GM18951 (cell line): ENCODE measurements at regions of chr1 and their contacts with region 1.

Region 1: GRCh38 chr1:204446370-204447111 is 34.9 kb upstream of the PPP1R15B start:
- POLR2A ChIP-seq: no peak

Region 2: DNA sequence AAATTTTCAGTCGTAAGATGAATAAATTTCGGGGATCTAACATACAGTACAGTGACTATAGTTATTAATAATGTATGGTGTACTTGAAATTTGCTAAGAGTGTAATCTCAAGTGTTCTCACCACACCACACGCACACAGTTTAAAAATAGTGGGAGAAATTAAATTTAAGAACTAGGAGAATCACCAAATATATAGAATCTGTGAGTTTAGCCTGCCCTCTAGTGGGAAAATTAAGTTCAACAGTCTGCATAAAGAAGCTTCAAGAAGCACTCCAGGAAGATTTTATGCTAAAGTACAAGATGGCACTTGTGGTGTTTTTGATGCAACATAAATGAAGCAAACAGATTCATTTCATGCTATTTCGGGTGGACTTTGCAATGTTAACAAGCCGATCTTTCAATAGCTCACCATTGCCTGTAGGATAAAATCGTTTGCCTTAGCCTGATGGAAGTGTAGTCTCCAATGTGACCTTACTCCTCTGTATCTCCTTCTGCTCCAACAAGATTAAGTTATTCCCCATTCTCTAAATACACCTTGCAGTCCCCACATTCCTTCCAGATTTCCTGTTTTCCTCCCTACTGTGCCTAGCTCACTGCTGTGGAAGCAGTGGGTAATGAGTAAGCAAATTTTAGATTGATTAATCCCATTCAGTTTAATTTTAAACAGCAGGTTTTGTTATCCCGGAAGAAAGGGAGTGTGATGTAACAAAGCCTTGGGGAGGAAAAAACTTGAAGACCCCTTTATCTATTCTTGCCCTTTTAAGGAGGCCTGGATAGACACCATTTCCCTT is 56.8 kb after region 1 on chr1:
- in situ Hi-C with region 1: loop called (anchors 5 kb)
- POLR2A ChIP-seq: no peak

Region 3: DNA sequence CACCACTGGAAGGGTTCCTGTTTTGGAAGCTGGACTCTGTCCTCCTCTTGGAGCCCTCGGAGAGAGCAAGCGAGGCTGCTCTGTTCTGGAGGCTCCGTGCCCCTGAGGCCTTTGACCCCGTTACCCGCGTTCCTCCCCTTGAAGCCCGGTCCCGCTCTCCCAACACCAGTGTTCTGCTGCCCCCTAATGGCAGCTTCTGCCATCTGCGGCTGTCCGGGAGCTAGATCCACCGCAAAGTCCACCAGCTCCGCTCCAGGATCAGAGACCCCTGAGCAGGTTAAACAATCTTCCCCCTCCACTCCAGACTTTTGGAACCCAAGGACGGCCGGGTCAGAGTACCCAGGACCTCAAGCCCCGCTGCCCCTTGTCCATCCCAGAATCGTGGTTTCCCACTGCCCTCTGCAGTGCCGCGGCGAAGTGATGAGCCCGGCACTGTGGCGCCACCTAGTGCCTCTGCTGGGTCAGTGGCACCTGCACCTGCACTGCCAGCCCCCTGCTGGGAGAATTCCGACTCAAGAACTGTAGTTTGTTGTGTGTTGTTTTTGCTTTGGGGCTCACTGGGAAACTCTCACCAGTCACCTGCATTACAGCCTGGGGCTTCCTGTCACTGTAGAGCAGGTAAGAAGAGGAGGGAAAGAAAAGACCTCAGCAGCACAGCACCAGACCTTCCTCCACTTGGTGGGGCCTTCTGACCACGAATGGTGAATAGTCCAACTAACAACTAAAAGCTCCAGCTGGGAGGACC is 360.6 kb after region 1 on chr1:
- in situ Hi-C with region 1: loop called (anchors 25 kb)
- POLR2A ChIP-seq: no peak